ENCODE measurements at regions of chr1 and their contacts with region 1.

Region 1: DNA sequence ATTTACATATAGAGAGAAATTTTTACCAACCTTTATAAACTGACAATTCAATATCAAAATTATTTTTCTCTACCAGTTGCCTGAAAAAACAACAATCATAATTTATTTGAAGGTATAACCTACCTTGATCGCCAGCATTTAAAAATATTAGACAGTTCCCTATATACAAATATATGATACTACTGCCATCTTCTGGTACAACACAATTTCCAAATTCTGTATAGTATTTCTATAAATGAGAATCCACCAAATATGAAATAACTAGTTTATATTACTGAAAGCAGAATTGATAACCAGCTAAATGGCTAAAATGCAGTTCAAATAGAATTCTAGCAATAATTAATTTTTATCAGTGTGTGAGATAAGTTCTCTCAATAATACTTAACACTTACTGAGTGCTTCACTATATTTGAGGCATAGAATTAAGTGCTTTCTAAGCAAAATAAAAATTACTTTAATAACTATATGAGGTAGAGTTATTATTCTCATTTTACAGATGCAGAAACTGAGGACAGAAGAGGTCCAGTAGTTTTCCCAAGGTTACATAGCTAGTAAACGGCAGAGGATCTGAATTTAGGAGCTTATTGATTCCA is 75.6 kb downstream of the PIGK start:
- DNase-seq: peak; percentile 16 to 45 (median 42)
- H3K4me3 ChIP-seq: no peak overlapping the region
- H3K27ac ChIP-seq: no peak overlapping the region
- H3K4me1 ChIP-seq: no peaks in the 10 kb centered on the region
- H3K27me3 ChIP-seq: no peaks in the 10 kb centered on the region

Region 2: GRCh38 chr1:76154206-76154956 is 989.2 kb before region 1 on chr1:
- CTCF ChIA-PET with region 1: interaction called, 21 read pairs
- POLR2A ChIA-PET with region 1: no interaction called
- DNase-seq: peak; percentile 76 to 85 (median 83)
- H3K4me3 ChIP-seq: peak overlapping the region; percentile 22 to 81 (median 70)
- H3K27ac ChIP-seq: no peak overlapping the region
- H3K4me1 ChIP-seq: peaks cover 0 to 7% (median 4%) of the 10 kb centered on the region in 4 experiments
- H3K27me3 ChIP-seq: no peaks in the 10 kb centered on the region